Activated CD4-positive, alpha-beta memory T cell treated with anti-CD3 and anti-CD28 coated beads for 36 hours (primary cell): ENCODE measurements at regions of chr6 and their contacts with region 1.

Region 1: GRCh38 chr6:73722318-73723060 is 26.5 kb downstream of the CD109 start:
- DNase-seq: peak; percentile 43
- H3K4me3 Mint-ChIP-seq: no peak overlapping the region
- H3K27ac Mint-ChIP-seq: no peak overlapping the region
- H3K4me1 Mint-ChIP-seq: peaks cover 27% of the 10 kb centered on the region
- H3K27me3 Mint-ChIP-seq: no peaks in the 10 kb centered on the region

Region 2: DNA sequence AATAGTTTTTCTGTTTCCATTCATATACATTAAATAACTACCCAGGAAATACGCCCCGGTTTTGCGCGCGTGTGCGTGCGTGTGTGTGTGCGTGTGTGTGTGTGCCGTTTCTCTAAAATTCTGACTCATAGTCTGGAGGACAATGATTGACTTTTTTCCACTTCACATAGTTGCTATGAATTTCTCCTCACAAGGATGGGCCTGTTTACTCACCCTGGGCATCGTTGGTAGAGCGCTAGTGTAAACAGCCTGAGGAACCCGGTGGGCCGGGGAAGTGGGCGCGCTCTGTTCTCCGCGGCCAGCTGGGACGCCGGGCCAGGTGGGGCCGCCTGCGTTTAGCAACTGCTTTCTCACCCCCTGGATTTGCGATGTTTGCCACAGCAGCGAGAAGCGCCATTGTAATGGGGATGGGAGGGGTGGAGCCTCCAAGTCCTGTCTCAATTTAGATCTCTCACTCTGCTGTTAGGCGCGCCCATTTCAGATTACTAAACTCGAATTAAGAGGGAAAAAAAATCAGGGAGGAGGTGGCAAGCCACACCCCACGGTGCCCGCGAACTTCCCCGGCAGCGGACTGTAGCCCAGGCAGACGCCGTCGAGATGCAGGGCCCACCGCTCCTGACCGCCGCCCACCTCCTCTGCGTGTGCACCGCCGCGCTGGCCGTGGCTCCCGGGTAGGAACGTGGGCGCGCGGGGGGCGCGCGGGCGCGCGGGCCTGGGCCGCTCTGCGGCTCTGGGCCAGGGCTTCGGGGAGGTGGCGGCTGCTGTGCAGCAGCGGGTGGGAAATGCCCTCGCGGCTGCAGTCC is 26.7 kb before region 1 on chr6 and contains the start of gene CD109:
- CTCF ChIA-PET with region 1: no interaction called
- POLR2A ChIA-PET with region 1: no interaction called
- intact Hi-C with region 1: loop called (anchors 1 kb)
- DNase-seq: peak; percentile 87
- H3K4me3 Mint-ChIP-seq: peak within 1 kb of the TSS; percentile 80
- H3K27ac Mint-ChIP-seq: peak within 1 kb of the TSS; percentile 90
- H3K4me1 Mint-ChIP-seq: peaks cover 36% of the 10 kb centered on the region
- H3K27me3 Mint-ChIP-seq: peaks cover 16% of the 10 kb centered on the region
- total RNA-seq, gene CD109: 7.2 to 9.1 TPM

Region 3: GRCh38 chr6:73898624-73899023 is 176.1 kb after region 1 on chr6:
- CTCF ChIA-PET with region 1: no interaction called
- POLR2A ChIA-PET with region 1: no interaction called
- intact Hi-C with region 1: no loop called
- DNase-seq: no peak
- H3K4me3 Mint-ChIP-seq: no peak overlapping the region
- H3K27ac Mint-ChIP-seq: no peak overlapping the region
- H3K4me1 Mint-ChIP-seq: no peaks in the 10 kb centered on the region
- H3K27me3 Mint-ChIP-seq: no peaks in the 10 kb centered on the region